H1 (cell line): ENCODE measurements at regions of chr21 and their contacts with region 1.

Region 1: DNA sequence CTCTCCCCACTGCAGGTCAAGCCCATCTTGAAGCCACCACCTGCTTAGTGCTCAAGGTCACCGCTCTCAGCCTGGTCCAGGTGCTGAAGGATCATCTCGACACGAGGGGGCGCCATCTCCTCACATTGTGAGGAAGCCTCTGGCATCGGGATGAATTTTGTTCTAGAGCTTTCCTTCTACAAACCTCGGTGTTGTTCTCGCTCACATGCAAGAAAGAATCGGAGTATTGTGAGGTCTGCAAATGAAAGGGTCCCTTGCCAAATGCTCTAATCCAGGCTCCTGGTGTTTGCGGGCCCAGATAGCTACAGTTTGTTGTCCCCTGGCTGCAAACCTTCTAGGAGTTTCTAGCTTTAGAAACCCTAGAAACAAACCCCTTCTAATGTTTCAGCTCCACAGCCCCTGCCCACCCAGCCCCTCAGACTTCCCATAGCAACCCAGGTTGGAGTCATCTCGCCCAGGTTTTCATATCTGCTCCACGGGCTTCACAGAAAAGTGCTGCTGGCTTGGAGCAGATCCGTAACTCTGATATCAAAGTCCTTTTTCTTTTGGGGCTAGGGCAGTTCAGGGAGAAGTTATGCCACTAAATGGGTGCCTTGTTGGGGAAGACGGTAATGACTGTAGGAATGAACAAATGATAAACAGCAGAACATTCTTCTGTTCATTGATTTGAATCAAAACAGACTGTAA is 8.6 kb upstream of the ATP5PO start:
- DNase-seq: peak; percentile 62 to 97
- H3K4me3 ChIP-seq: no peak overlapping the region
- H3K27ac ChIP-seq: no peak overlapping the region
- H3K4me1 ChIP-seq: no peaks in the 10 kb centered on the region
- H3K27me3 ChIP-seq: no peaks in the 10 kb centered on the region
- CTCF ChIP-seq: peak; percentile 93 to 97 (median 97)
- EP300 ChIP-seq: no peak; a peak in 1 of 3 replicates
- POLR2A ChIP-seq: no peak
- RAD21 ChIP-seq: peak; percentile 99 to 100

Region 2: DNA sequence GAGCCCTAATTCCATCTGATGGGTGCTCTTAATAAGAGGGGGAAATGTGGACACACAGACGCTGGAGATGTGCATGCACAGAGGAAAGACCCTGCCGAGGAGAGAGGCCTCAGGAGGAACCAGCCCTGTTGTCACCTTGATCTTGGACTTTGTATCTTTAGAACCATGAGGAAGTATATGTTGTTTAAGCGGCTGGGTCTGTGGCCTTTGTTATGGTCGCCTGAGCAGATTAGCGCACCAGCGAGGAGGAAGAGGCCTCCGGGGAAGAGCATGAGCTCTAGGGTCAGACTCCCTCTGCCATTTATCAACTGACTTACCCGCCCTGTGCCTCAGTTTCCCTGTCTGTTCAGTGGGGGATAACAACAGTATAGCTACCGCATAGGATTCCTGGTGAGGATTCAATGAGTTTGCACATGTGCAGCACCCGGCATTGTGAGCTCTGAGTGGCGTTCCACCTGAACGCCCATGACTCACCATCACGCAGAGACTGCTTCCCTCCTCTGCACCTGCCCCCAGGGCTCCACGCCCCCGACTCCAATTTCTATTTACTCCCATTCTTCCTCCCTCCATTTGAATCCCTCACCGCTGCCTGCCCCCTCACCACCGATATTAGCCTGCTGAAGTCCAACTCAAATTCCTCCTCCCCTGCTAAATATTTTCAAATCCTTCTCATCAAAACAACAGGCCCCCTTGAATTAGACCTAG is 75.8 kb before region 1 on chr21:
- CTCF ChIA-PET with region 1: no interaction called
- POLR2A ChIA-PET with region 1: no interaction called
- DNase-seq: no peak
- H3K4me3 ChIP-seq: no peak overlapping the region
- H3K27ac ChIP-seq: no peak overlapping the region
- H3K4me1 ChIP-seq: no peaks in the 10 kb centered on the region; a peak in 3 of 7 replicates
- H3K27me3 ChIP-seq: no peaks in the 10 kb centered on the region
- CTCF ChIP-seq: no peak
- EP300 ChIP-seq: no peak
- POLR2A ChIP-seq: no peak
- RAD21 ChIP-seq: no peak

Region 3: GRCh38 chr21:33940164-33940880 is 16.1 kb after region 1 on chr21:
- CTCF ChIA-PET with region 1: interaction called, 18 read pairs
- POLR2A ChIA-PET with region 1: interaction called, 3 read pairs
- DNase-seq: peak in 1 of 2 experiments; percentile 29
- H3K4me3 ChIP-seq: no peak overlapping the region
- H3K27ac ChIP-seq: no peak overlapping the region
- H3K4me1 ChIP-seq: peaks cover 1 to 7% (median 5%) of the 10 kb centered on the region in 4 experiments; a peak in 2 of 7 replicates
- H3K27me3 ChIP-seq: no peaks in the 10 kb centered on the region
- CTCF ChIP-seq: no peak
- EP300 ChIP-seq: no peak
- POLR2A ChIP-seq: no peak
- RAD21 ChIP-seq: no peak

Region 4: DNA sequence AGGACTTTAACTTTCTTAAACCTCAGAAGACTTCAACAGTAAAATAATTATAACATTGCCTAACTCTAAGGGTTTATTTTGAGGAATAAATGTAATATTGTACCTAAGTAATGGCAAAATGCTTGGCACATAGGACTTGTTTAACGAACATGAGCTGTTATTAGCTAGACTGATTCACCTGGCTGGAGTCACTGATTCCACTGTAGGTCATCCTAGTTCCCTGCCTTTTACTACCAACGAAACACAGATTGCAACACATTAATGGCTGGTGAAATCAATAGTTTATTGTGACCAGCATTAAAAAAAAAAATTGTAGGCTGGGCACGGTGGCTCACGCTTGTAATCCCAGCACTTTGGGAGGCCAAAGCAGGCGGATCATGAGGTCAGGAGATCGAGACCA is 36.8 kb after region 1 on chr21:
- CTCF ChIA-PET with region 1: interaction called, 12 read pairs
- POLR2A ChIA-PET with region 1: no interaction called
- DNase-seq: no peak
- H3K4me3 ChIP-seq: no peak overlapping the region
- H3K27ac ChIP-seq: no peak overlapping the region
- H3K4me1 ChIP-seq: no peaks in the 10 kb centered on the region
- H3K27me3 ChIP-seq: no peaks in the 10 kb centered on the region
- CTCF ChIP-seq: no peak
- EP300 ChIP-seq: no peak
- POLR2A ChIP-seq: no peak
- RAD21 ChIP-seq: no peak

Region 5: DNA sequence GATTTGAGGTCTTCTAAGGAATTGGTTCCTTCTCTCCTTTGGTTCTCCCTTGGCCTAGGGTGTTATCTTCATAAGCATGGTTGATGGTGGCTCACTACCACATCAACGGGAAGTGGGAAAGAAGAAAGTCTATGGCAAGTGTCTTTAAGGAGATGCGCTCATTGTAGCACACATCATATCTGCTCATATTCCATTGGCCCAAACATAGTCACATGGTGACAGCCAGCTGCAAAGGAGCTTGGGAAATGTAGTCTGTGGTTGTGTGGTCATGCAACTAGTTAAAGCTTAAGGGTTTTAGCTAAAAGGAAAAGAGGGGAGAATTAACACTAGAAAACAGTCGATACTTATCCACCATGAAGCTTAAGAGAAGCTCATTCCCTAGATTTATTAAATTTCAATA is 137.8 kb after region 1 on chr21:
- CTCF ChIA-PET with region 1: interaction called, 11 read pairs
- POLR2A ChIA-PET with region 1: no interaction called
- DNase-seq: no peak
- H3K4me3 ChIP-seq: no peak overlapping the region
- H3K27ac ChIP-seq: no peak overlapping the region
- H3K4me1 ChIP-seq: no peaks in the 10 kb centered on the region
- H3K27me3 ChIP-seq: peaks cover 0 to 1% (median 0%) of the 10 kb centered on the region in 4 experiments; a peak in 1 of 7 replicates
- CTCF ChIP-seq: no peak
- EP300 ChIP-seq: no peak
- POLR2A ChIP-seq: no peak
- RAD21 ChIP-seq: no peak

Region 6: DNA sequence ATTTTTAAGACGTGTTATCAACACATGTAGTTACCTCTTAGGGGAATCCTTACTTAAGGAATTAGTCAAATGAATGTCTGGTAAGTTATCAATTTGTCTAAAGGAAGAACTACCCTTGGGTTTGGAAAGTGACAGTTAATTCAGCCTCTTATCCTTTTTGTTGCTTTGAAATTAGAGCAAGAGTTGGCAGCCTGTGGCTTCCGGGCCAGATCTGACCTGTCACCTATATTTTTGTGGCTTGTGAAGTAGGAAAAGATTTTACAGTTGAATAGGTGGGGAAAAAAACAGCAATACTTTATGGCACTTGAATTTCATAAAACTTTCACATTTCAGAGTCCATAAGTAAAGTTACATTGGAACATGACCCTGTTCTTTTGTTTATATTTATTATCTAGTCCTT is 154.7 kb after region 1 on chr21:
- CTCF ChIA-PET with region 1: interaction called, 17 read pairs
- POLR2A ChIA-PET with region 1: interaction called, 12 read pairs
- DNase-seq: no peak
- H3K4me3 ChIP-seq: no peak overlapping the region
- H3K27ac ChIP-seq: no peak overlapping the region
- H3K4me1 ChIP-seq: peaks cover 0 to 7% (median 2%) of the 10 kb centered on the region in 4 experiments; a peak in 6 of 7 replicates
- H3K27me3 ChIP-seq: no peaks in the 10 kb centered on the region
- CTCF ChIP-seq: no peak
- EP300 ChIP-seq: no peak
- POLR2A ChIP-seq: no peak
- RAD21 ChIP-seq: no peak

Region 7: DNA sequence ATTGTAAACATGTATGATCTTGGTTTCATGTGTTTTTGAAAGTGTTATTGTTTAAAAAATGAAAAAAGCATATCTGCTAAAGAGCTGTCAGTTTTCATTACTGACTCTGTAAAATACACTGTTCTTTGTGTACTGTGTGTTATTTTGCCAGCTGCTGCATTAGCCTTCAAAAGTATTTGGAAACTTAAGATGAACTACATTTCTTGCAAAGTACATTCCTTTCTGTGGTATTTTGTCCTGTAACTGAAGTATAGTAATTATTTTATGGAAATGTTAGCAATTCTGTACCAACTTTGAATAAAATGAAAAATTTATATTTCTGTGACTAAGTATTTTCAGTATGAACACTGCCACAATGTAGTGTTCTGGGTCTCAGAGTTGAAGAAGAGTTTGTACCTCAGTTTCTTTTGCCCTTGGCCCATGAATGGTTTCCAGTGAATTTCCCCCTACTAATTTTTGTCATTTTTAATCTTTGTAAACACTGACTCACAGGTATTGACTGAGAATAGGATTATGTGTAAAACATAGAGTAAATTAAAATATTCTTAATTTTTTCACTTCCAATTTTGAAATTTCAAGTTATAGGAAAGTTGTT is 181.8 kb after region 1 on chr21:
- CTCF ChIA-PET with region 1: interaction called, 10 read pairs
- POLR2A ChIA-PET with region 1: no interaction called
- DNase-seq: no peak
- H3K4me3 ChIP-seq: no peak overlapping the region
- H3K27ac ChIP-seq: no peak overlapping the region
- H3K4me1 ChIP-seq: peaks cover 0 to 7% (median under 1%) of the 10 kb centered on the region in 4 experiments; a peak in 4 of 7 replicates
- H3K27me3 ChIP-seq: no peaks in the 10 kb centered on the region
- CTCF ChIP-seq: no peak
- EP300 ChIP-seq: no peak
- POLR2A ChIP-seq: no peak
- RAD21 ChIP-seq: no peak

Region 8: GRCh38 chr21:34243562-34243961 is 319.3 kb after region 1 on chr21:
- CTCF ChIA-PET with region 1: interaction called, 14 read pairs
- POLR2A ChIA-PET with region 1: interaction called, 3 read pairs
- DNase-seq: peak in 1 of 2 experiments; percentile 60
- H3K4me3 ChIP-seq: no peak overlapping the region
- H3K27ac ChIP-seq: no peak overlapping the region
- H3K4me1 ChIP-seq: no peaks in the 10 kb centered on the region
- H3K27me3 ChIP-seq: no peaks in the 10 kb centered on the region
- CTCF ChIP-seq: peak; percentile 71 to 74 (median 74)
- EP300 ChIP-seq: no peak
- POLR2A ChIP-seq: no peak
- RAD21 ChIP-seq: peak; percentile 76 to 86